ENCODE measurements at regions of chr20 and their contacts with region 1.

Region 1: GRCh38 chr20:44966030-44966961 is at the start of gene STK4:
- DNase-seq: peak; percentile 99
- H3K4me3 Mint-ChIP-seq: peak within 1 kb of the TSS; percentile 91
- H3K27ac Mint-ChIP-seq: peak within 1 kb of the TSS; percentile 98
- H3K4me1 Mint-ChIP-seq: peaks cover 65% of the 10 kb centered on the region
- H3K27me3 Mint-ChIP-seq: no peaks in the 10 kb centered on the region
- total RNA-seq, gene STK4: 141 and 143 TPM in 2 replicates

Region 2: GRCh38 chr20:44485078-44485828 is 481.0 kb before region 1 on chr20:
- intact Hi-C with region 1: no loop called
- DNase-seq: no peak
- H3K4me3 Mint-ChIP-seq: no peak overlapping the region
- H3K27ac Mint-ChIP-seq: no peak overlapping the region
- H3K4me1 Mint-ChIP-seq: peaks cover 4% of the 10 kb centered on the region
- H3K27me3 Mint-ChIP-seq: no peaks in the 10 kb centered on the region

Region 3: DNA sequence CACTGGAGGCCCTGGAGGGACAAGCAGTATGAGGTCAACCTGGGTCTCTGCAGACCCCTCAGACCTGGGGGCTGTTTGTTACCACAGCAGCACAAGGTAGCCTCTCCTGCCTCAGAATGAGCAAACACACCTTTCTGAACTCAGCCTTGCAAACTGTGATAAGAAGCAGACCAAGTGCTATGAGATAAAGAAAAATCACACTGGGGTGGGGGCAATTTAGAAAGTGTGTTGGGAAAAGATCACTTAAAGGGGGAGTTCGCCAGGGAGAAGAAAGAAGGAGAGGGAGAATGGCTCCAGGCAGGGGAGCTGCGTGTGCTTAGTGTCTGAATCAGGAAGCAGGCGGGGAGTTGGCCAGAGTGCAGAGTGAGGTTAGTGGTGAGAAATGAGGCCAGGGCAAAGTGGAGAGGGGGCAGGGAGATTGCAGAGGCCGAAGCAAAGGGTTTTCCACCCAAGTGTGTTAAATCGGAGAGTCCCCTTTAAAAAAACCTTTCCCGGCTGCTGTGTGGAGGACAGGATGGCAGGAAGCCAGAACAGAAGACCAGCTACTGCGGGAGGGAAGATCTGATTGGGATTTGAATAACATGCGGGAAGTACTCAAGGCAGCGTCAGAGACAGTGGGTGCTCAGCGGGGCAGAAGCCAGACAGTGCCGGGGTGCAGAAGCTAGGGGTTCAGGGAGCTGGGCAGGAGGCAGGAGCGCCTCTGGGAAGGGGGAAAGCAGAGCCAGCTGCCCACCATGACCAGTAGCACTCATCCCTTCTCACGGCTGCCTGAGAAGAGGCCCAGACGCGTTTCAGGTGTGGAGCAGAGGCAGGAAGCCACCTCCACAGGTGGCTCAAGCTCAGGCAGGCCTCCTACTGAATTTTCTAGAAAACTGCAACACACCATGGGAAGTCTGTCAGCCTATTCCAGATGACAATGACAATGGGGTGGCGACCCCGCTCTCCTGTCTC is 323.8 kb before region 1 on chr20:
- intact Hi-C with region 1: loop called (anchors 2 kb)
- DNase-seq: peak; percentile 77
- H3K4me3 Mint-ChIP-seq: peak overlapping the region; percentile 69
- H3K27ac Mint-ChIP-seq: peak overlapping the region; percentile 92
- H3K4me1 Mint-ChIP-seq: peaks cover 59% of the 10 kb centered on the region
- H3K27me3 Mint-ChIP-seq: no peaks in the 10 kb centered on the region

Region 4: DNA sequence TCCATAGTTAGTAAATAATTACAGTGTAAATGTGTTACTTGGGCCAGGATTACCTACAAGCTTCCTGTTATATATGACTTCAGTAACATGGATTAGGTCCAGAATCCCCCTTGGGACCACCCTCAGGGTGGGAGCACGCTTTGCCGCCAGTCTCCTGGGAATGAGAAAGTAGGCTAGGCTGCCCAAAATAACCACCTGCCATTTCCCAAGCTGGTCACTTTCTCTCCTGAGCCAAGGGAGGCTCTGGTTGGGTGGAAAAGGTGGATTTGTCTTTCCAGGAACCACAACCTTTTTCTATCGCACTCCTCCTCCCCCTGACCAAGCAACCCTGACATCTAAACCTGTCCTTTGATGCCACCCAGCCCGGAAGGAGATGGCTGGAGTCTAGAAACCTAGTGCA is 146.4 kb before region 1 on chr20:
- intact Hi-C with region 1: no loop called
- DNase-seq: no peak
- H3K4me3 Mint-ChIP-seq: no peak overlapping the region
- H3K27ac Mint-ChIP-seq: no peak overlapping the region
- H3K4me1 Mint-ChIP-seq: no peaks in the 10 kb centered on the region
- H3K27me3 Mint-ChIP-seq: peaks cover 7% of the 10 kb centered on the region

Region 5: DNA sequence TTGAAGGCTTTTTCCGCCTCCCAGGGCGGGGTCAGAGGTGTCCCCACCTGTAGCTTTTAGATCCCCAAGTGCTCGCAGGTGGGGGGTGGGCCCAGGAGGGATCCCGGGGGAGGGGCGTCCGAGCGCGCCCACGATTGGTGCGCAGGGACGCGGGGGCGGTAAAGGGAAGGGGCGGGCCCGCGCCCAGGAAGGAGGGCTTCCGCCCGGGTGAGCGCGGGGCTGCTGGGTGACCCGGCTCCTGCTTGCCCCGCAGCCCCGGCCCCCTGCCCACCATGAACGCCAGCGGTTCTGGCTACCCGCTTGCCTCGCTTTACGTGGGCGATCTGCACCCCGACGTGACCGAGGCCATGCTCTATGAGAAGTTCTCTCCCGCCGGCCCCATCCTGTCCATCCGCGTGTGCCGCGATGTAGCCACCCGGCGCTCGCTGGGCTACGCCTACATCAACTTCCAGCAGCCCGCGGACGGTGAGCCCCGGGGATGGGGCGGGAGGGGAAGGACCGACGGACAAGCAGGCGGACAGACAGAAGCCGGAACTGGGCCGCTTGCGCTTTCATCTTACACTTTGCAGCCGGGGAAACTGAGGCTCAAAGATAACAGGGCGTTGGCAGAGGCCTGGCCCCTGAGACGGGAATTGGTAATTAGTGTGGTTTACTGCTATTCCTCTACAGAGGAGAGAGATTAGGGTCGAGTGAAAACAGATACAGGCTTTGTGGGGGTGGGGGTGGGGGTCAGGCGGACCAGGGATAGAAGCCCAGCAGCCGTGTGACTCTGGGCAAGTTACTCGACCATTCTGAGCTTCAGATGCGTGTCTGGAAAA is 56.2 kb before region 1 on chr20 and contains the start of gene PABPC1L:
- intact Hi-C with region 1: loop called (anchors 2 kb)
- DNase-seq: peak; percentile 94
- H3K4me3 Mint-ChIP-seq: peak within 1 kb of the TSS; percentile 91
- H3K27ac Mint-ChIP-seq: peak within 1 kb of the TSS; percentile 82
- H3K4me1 Mint-ChIP-seq: peaks cover 35% of the 10 kb centered on the region
- H3K27me3 Mint-ChIP-seq: no peaks in the 10 kb centered on the region
- total RNA-seq, gene PABPC1L: 96.9 and 103 TPM in 2 replicates

Region 6: GRCh38 chr20:44990425-44990824 is 24.1 kb after region 1 on chr20:
- intact Hi-C with region 1: loop called (anchors 1 kb)
- DNase-seq: peak; percentile 77
- H3K4me3 Mint-ChIP-seq: peak overlapping the region; percentile 83
- H3K27ac Mint-ChIP-seq: peak overlapping the region; percentile 93
- H3K4me1 Mint-ChIP-seq: peaks cover 63% of the 10 kb centered on the region
- H3K27me3 Mint-ChIP-seq: no peaks in the 10 kb centered on the region

Region 7: GRCh38 chr20:45211569-45212474 is 245.5 kb after region 1 on chr20:
- intact Hi-C with region 1: no loop called
- DNase-seq: no peak
- H3K4me3 Mint-ChIP-seq: no peak overlapping the region
- H3K27ac Mint-ChIP-seq: no peak overlapping the region
- H3K4me1 Mint-ChIP-seq: no peaks in the 10 kb centered on the region
- H3K27me3 Mint-ChIP-seq: peaks cover 16% of the 10 kb centered on the region

Region 8: DNA sequence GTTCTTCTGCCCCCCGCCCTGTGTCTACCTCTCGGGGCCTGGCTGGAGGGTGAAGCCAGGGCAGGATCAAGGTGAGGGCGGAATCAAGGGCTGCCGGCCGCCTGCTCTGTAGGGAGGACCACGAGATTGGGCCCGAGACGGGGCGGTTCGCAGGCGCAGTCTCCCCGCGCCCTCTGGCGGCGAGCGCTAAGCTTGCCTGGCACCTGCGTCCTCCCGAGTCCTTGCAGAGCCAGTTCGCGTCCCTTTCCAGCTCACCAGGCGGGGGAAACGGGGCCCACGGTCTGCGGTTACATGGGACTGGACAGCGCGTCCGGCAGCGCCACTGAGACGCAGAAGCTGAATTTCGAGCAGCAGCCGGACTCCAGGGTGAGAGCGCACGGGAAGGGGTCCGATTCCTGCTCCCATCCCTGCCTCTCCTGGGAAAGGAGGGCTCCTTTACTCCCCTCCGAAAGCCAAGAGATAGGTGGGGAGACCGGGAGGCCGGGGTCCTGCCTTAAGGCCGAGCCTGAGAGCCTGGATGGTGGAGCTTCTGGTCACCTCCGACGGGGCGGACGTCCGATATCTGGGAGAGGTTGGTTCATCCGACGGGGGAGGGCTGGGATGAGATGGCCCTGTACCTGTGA is 345.4 kb after region 1 on chr20:
- intact Hi-C with region 1: loop called (anchors 10 kb)
- DNase-seq: peak; percentile 91
- H3K4me3 Mint-ChIP-seq: no peak overlapping the region
- H3K27ac Mint-ChIP-seq: no peak overlapping the region
- H3K4me1 Mint-ChIP-seq: peaks cover 10% of the 10 kb centered on the region
- H3K27me3 Mint-ChIP-seq: peaks cover 15% of the 10 kb centered on the region